PC-9 (cell line): ENCODE measurements at regions of chr7 and their contacts with region 1.

Region 1: GRCh38 chr7:27774717-27775328 is 34.9 kb downstream of the TAX1BP1 start:
- DNase-seq: no peak
- H3K4me3 ChIP-seq: no peak overlapping the region
- H3K27ac ChIP-seq: no peak overlapping the region
- H3K4me1 ChIP-seq: peaks cover 23% of the 10 kb centered on the region
- H3K27me3 ChIP-seq: no peaks in the 10 kb centered on the region
- CTCF ChIP-seq: peak; percentile 88

Region 2: DNA sequence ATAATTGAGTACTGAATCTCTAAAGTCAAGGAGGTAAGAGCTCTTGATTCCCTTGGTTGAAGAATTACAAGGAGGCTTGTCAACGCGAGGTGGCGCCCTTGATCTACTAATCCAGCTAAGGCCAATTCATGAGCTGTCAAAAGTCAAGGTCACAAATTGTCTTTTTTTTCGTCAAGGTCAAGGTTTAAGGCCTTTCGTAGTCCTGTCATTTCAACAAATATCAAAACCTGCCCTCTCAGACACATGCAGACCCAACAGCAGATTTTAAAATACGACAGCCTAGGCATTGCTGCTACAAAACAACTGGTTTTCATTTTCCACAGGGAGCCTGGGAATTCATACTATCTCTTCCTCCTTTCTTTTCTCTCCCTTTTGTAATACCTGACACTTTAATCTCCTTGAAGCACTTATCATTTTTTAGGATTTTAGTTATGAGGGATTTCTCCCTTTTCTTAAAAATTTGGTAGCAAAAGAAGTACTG is 578.5 kb before region 1 on chr7:
- CTCF ChIA-PET with region 1: interaction called, 5 read pairs
- POLR2A ChIA-PET with region 1: no interaction called
- intact Hi-C with region 1: loop called (anchors 2 kb)
- DNase-seq: peak; percentile 59 to 76
- H3K4me3 ChIP-seq: no peak overlapping the region
- H3K27ac ChIP-seq: no peak overlapping the region
- H3K4me1 ChIP-seq: no peaks in the 10 kb centered on the region
- H3K27me3 ChIP-seq: peaks cover 13% of the 10 kb centered on the region; the same call in 1 of the 2 replicates
- CTCF ChIP-seq: peak; percentile 99

Region 3: GRCh38 chr7:27409776-27410175 is 365.0 kb before region 1 on chr7:
- CTCF ChIA-PET with region 1: no interaction called
- POLR2A ChIA-PET with region 1: no interaction called
- intact Hi-C with region 1: no loop called
- DNase-seq: no peak
- H3K4me3 ChIP-seq: no peak overlapping the region
- H3K27ac ChIP-seq: no peak overlapping the region
- H3K4me1 ChIP-seq: no peaks in the 10 kb centered on the region
- H3K27me3 ChIP-seq: no peaks in the 10 kb centered on the region
- CTCF ChIP-seq: no peak

Region 4: GRCh38 chr7:27605689-27606269 is 169.0 kb before region 1 on chr7:
- CTCF ChIA-PET with region 1: interaction called, 5 read pairs
- POLR2A ChIA-PET with region 1: no interaction called
- intact Hi-C with region 1: loop called (anchors 1 kb)
- DNase-seq: no peak
- H3K4me3 ChIP-seq: no peak overlapping the region
- H3K27ac ChIP-seq: peak overlapping the region; percentile 13
- H3K4me1 ChIP-seq: peaks cover 28% of the 10 kb centered on the region
- H3K27me3 ChIP-seq: no peaks in the 10 kb centered on the region
- CTCF ChIP-seq: peak; percentile 76

Region 5: DNA sequence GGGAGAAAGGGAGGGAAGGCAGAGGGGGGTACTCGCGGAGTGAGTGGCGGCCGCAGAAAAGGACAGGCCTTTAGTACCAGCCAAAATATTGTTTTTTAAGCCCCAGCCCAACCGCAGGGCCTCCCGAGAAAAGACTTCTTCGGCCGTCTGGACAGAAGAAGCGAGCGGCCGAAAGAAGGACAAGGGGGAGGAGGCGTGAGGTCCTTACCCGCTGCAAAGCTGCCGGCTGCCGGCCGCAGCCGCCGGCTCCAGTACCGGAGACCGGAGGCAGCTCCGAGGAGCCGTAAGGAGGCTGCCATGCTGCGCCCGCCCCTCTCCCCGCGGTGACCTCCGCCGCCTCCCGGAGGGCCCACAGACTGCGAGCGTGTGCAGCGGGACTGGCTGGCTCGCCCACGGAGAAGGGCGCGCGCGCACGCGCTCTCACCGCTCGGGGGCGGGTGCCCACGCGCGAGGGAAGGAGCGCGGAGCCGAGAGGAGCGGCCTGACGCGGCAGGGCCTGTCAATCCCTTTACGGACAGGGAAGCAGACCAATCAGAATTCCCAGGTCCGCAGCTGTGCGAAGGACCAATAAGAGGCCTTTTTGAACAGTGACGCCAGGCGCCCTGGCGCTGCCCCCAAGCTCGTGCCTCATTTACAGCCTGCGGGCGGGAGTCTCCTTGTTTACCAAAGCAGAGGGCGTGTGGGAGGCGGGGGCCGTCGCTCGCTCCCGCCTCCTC is 112.2 kb before region 1 on chr7 and contains the start of gene HIBADH:
- CTCF ChIA-PET with region 1: no interaction called
- POLR2A ChIA-PET with region 1: interaction called, 3 read pairs
- intact Hi-C with region 1: loop called (anchors 2 kb)
- DNase-seq: peak; percentile 99
- H3K4me3 ChIP-seq: peak within 1 kb of the TSS; percentile 79
- H3K27ac ChIP-seq: peak within 1 kb of the TSS; percentile 64
- H3K4me1 ChIP-seq: peaks cover 22% of the 10 kb centered on the region
- H3K27me3 ChIP-seq: no peaks in the 10 kb centered on the region
- CTCF ChIP-seq: no peak; the same call in 1 of the 2 replicates
- total RNA-seq, gene HIBADH: 72.4 and 73.9 TPM in 2 replicates

Region 6: DNA sequence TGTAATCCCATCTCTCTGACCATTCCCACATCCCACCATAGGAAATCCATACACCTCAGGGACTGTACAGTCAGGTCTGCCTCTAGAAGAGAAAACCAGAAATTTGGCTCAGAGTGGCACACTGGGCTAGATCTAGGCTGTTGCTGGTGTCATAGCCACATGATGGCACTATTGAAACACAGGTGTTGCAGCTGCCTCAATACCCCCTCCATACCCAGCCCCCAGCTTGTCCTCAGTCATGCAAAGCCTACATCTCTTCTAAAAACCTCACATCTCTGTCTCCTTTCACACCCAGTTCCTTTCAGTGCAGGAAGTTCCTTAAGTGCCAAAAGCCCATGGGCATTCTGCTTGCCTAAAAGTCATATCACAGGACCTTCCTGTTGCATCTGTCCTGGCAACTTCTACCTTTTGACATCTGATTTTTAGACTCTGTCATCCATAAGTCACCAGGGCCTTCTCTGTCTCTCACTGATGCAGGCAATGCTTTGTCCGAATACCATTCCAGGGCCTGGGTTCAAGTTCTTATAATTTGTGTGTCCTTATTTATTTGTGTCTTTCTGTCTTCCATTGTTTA is 85.1 kb before region 1 on chr7:
- CTCF ChIA-PET with region 1: interaction called, 4 read pairs
- POLR2A ChIA-PET with region 1: no interaction called
- intact Hi-C with region 1: loop called (anchors 1 kb)
- DNase-seq: peak; percentile 49 to 59
- H3K4me3 ChIP-seq: no peak overlapping the region
- H3K27ac ChIP-seq: no peak overlapping the region
- H3K4me1 ChIP-seq: peaks cover 16% of the 10 kb centered on the region
- H3K27me3 ChIP-seq: no peaks in the 10 kb centered on the region
- CTCF ChIP-seq: peak; percentile 69